Mammary epithelial cell (primary cell): ENCODE measurements at regions of chr2 and their contacts with region 1.

Region 1: GRCh38 chr2:138787053-138787666 is 7.0 kb upstream of the NXPH2 start:
- DNase-seq: peak; percentile 29
- H3K4me3 ChIP-seq: no peak overlapping the region
- H3K27ac ChIP-seq: no peak overlapping the region
- H3K4me1 ChIP-seq: no peaks in the 10 kb centered on the region
- H3K27me3 ChIP-seq: no peaks in the 10 kb centered on the region
- CTCF ChIP-seq: peak; percentile 76 to 87

Region 2: GRCh38 chr2:137910641-137911040 is 876.5 kb before region 1 on chr2:
- CTCF ChIA-PET with region 1: no interaction called
- dilution Hi-C with region 1: loop called (anchors 25 kb)
- in situ Hi-C with region 1: loop called in 1 of 2 experiments (anchors 10 kb)
- intact Hi-C with region 1: loop called (anchors 2 kb)
- DNase-seq: no peak
- H3K4me3 ChIP-seq: no peak overlapping the region
- H3K27ac ChIP-seq: no peak overlapping the region
- H3K4me1 ChIP-seq: no peaks in the 10 kb centered on the region
- H3K27me3 ChIP-seq: no peaks in the 10 kb centered on the region
- CTCF ChIP-seq: peak; percentile 52 to 69

Region 3: DNA sequence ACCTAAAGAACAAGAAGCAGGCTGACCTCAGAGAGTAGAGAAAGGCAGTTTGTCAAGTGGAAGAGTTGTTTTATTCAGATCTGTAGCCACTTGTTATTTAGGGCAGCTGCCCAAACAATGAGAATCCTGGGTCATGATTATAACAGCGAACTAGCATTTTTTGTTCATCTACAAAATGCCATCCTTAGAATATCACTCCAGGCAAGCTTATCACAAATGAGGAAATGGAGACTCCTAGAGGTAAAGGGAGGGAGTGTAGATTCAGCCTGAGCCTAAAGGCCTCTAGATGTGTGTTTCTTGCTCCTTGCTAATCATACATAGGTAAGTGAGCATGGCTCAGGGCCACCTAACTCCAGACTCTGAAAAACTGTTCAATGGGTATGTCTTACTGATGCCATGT is 696.8 kb before region 1 on chr2:
- CTCF ChIA-PET with region 1: no interaction called
- dilution Hi-C with region 1: no loop called
- in situ Hi-C with region 1: loop called in 1 of 2 experiments (anchors 10 kb)
- intact Hi-C with region 1: loop called (anchors 2 kb)
- DNase-seq: peak; percentile 56
- H3K4me3 ChIP-seq: no peak overlapping the region
- H3K27ac ChIP-seq: no peak overlapping the region
- H3K4me1 ChIP-seq: peaks cover 12% of the 10 kb centered on the region
- H3K27me3 ChIP-seq: no peaks in the 10 kb centered on the region
- CTCF ChIP-seq: peak; percentile 89 to 92

Region 4: GRCh38 chr2:138373993-138374408 is 413.2 kb before region 1 on chr2:
- CTCF ChIA-PET with region 1: interaction called, 4 read pairs
- dilution Hi-C with region 1: no loop called
- in situ Hi-C with region 1: loop called in 1 of 2 experiments (anchors 25 kb)
- intact Hi-C with region 1: loop called (anchors 2 kb)
- DNase-seq: peak; percentile 17
- H3K4me3 ChIP-seq: no peak overlapping the region
- H3K27ac ChIP-seq: no peak overlapping the region
- H3K4me1 ChIP-seq: no peaks in the 10 kb centered on the region
- H3K27me3 ChIP-seq: no peaks in the 10 kb centered on the region
- CTCF ChIP-seq: peak; percentile 70 to 73

Region 5: DNA sequence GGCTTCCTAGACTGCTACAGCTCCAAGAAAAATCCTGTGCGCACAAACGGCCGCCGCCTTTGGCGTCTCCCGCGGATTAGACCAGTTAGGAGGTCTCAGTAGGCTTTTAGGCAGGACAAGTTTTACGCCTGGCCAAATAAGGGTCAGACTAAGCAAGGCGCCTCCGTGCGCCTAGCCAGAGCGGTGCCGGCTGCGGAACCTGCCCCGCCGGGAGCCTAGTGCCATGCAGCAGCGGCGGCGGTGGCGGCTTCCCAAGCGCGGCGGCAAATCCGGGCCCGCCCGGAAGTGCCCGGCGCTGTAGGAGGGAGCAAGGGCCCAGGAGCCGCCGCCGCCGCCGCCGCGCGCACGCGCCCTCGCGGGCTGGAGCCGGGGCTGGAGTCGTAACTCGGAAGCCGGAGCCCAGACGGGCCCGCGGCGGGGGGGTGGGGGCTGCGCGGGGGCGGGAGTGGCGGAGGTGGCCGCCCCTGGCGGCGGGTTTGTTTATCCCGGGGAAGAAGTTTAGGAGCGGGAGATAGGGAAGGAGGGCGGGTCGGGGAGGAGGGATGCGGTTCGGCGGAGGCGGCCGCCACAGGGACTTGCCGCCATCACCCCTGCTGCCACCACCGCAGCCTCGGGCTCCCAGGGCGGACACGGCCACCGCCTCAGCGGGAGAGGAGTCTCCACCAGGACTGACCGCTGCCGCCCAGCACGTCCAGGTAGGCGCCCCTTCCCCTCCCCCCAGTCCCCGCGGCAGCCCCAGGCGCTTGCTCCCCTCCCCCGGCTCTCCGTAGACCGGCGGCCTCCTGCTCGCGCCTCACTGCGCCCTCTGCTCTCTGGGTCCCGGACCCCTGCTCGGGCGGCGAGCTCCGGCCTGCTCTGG is 285.5 kb before region 1 on chr2 and contains the start of gene SPOPL:
- CTCF ChIA-PET with region 1: no interaction called
- dilution Hi-C with region 1: no loop called
- in situ Hi-C with region 1: no loop called
- intact Hi-C with region 1: loop called (anchors 1 kb)
- DNase-seq: peak; percentile 91
- H3K4me3 ChIP-seq: peak within 1 kb of the TSS; percentile 90 to 98 (median 98)
- H3K27ac ChIP-seq: peak within 1 kb of the TSS; percentile 86
- H3K4me1 ChIP-seq: peaks cover 15% of the 10 kb centered on the region
- H3K27me3 ChIP-seq: no peaks in the 10 kb centered on the region
- CTCF ChIP-seq: peak in 1 of 2 donors; percentile 2
- total RNA-seq, gene SPOPL: 23.2 to 24.3 TPM

Region 6: DNA sequence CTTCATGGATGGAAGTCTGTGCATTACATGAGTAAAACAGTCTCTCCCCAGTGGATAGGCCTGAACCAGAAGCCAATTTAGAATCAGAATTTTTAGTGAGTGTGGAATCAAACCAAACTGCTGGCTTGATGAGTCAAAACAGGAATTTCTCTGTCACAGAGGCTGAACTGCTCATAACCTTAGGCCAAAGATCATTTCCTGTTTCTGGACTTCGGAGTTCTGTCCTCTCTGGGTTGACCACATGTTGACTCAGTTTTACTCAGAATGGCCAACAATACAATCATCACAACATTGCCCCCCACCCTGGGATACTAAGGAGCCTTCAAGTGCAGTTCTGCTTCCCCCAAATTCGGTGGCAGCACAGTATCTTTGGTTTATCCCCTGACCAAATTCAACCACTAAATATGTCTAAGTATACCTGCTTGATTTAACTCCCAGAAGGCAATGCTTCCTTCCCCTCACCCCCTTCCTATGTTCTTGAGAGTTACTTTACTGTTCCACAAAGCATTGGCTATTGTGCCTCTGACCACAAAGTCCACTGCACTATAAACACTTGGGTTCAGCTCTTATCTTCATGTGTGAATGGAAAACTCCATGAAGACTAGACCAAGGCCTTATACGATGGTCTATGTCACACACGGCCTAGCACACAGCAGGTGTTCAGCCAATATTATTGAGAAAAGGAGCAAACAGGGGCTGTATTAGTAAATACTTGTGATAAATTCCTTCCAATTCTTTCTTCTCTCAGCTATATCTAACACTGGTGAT is 74.8 kb before region 1 on chr2:
- CTCF ChIA-PET with region 1: no interaction called
- dilution Hi-C with region 1: no loop called
- in situ Hi-C with region 1: no loop called
- intact Hi-C with region 1: no loop called
- DNase-seq: no peak
- H3K4me3 ChIP-seq: no peak overlapping the region
- H3K27ac ChIP-seq: no peak overlapping the region
- H3K4me1 ChIP-seq: peaks cover 13% of the 10 kb centered on the region
- H3K27me3 ChIP-seq: no peaks in the 10 kb centered on the region
- CTCF ChIP-seq: no peak

Region 7: GRCh38 chr2:138727956-138728355 is 59.2 kb before region 1 on chr2:
- CTCF ChIA-PET with region 1: no interaction called
- dilution Hi-C with region 1: no loop called
- in situ Hi-C with region 1: no loop called
- intact Hi-C with region 1: loop called (anchors 1 kb)
- DNase-seq: no peak
- H3K4me3 ChIP-seq: no peak overlapping the region
- H3K27ac ChIP-seq: no peak overlapping the region
- H3K4me1 ChIP-seq: no peaks in the 10 kb centered on the region
- H3K27me3 ChIP-seq: no peaks in the 10 kb centered on the region
- CTCF ChIP-seq: peak in 1 of 2 donors; percentile 18